Cardiac septum (tissue), 1 donor: ENCODE measurements at regions of chr11 and their contacts with region 1.

Region 1: DNA sequence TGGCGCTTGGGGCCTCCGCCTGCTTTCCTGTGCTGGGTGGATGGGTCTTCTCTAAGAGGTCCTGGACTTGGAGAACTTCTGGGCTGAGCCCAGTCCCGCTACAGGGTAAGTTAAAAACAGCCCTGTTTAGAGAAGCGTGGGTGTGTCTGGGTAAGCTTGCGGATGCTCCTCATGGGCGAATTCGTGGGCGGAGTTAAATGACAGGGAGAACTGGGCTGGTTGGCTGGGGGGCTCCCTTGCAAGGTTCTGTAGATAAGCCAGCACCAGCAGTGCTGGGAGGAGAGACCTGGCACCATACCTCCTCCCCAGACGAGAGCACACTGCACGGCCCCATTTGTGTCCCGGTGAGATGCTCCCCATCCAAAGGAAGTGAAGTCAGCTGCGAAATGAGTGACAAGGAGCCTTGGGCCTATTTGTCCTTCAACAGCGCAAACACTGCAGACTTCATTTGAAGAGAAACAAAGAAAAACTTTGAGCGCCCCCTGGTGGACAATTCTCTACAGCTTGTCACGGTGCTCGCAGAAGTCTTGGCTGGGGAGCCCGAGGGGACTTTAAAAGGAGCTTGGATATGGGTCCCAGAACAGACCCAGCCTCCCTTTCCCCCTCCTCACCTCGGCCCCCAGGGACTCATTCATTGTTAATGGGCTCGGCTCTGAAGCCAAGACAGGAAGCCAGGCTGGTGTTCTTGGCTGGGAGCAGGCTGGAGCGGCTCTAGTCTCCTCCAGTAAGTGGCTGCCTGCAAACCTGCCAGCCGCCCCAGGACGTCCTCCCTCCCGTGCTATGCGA is 39.5 kb downstream of the TP53I11 start:
- DNase-seq: peak; percentile 84

Region 2: GRCh38 chr11:44621140-44621681 is 290.0 kb before region 1 on chr11:
- intact Hi-C with region 1: loop called (anchors 1 kb)
- DNase-seq: peak; percentile 91

Region 3: GRCh38 chr11:44868455-44869421 is 42.5 kb before region 1 on chr11:
- intact Hi-C with region 1: no loop called
- DNase-seq: no peak